Caco-2 (cell line): ENCODE measurements at regions of chr18 and their contacts with region 1.

Region 1: DNA sequence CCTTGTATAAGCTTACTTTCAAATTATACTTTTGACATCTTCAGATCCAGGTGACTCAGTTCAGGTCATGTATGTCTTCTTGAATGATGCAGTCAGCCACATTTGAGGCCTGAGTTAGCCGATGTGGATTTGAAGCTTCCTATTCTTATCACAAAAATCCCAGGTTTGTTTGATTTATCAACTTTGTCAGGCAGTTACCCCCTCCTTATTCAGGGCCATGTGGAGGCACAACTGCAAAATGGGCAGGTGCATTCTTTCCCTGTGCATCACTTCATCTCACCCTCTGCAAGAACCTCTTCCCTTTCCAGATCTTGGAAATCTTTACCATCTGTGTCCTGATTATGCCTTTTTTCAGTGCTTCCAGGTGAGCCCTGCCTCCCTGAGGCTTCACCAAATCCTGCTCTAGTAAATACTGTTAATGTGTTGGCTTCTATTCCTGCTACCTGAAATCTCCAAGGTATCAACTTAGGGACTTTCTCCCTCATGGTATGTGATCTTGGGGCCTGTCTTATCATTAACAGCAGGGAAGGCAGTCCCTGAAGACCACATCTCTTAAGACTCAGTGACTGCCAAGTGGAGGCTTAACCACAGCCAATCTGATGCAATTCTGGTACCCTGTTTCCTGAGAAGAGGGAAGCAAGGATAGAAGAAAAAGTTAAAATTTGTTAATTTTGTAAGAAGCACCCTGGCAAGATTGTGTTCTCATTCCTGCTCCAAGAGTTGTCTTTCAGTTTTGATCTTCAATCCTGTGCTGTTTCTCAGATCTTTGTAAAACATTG is 9.4 kb upstream of the ARHGAP28 start:
- DNase-seq: peak; percentile 56 to 57
- H3K4me3 ChIP-seq: no peak overlapping the region
- H3K4me3 Mint-ChIP-seq: peak overlapping the region; percentile 60
- H3K27ac Mint-ChIP-seq: peak overlapping the region; percentile 99
- H3K4me1 ChIP-seq: peaks cover 96% of the 10 kb centered on the region
- H3K4me1 Mint-ChIP-seq: peaks cover 65% of the 10 kb centered on the region
- H3K27me3 ChIP-seq: no peaks in the 10 kb centered on the region
- H3K27me3 Mint-ChIP-seq: no peaks in the 10 kb centered on the region
- CTCF ChIP-seq: no peak

Region 2: DNA sequence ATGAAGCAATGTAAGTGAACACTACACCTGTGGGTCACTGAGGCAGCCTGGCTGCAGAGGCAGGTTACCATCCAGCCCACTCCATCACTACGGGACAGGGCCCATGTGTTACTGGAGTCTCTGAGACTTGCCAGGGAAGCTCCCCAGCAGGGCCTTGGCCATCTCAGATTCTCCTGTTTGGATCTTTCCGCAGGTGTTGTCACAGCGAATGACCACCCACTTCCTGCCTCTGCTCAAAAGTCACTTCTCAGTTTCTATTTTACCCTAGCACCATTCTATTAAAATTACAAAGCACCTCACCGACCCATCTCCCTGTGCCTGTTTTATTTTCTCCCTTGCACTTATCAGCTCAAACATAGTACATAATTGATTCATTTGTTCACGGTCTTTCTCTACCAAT is 270.9 kb before region 1 on chr18:
- CTCF ChIA-PET with region 1: no interaction called
- POLR2A ChIA-PET with region 1: no interaction called
- intact Hi-C with region 1: no loop called
- DNase-seq: no peak
- H3K4me3 ChIP-seq: no peak overlapping the region
- H3K4me3 Mint-ChIP-seq: no peak overlapping the region
- H3K27ac Mint-ChIP-seq: no peak overlapping the region
- H3K4me1 ChIP-seq: no peaks in the 10 kb centered on the region
- H3K4me1 Mint-ChIP-seq: no peaks in the 10 kb centered on the region
- H3K27me3 ChIP-seq: no peaks in the 10 kb centered on the region
- H3K27me3 Mint-ChIP-seq: peaks cover 11% of the 10 kb centered on the region
- CTCF ChIP-seq: no peak

Region 3: GRCh38 chr18:6543330-6543908 is 176.7 kb before region 1 on chr18:
- CTCF ChIA-PET with region 1: no interaction called
- POLR2A ChIA-PET with region 1: no interaction called
- intact Hi-C with region 1: loop called (anchors 1 kb)
- DNase-seq: peak in 1 of 2 experiments; percentile 35
- H3K4me3 ChIP-seq: no peak overlapping the region
- H3K4me3 Mint-ChIP-seq: no peak overlapping the region
- H3K27ac Mint-ChIP-seq: no peak overlapping the region
- H3K4me1 ChIP-seq: peaks cover 7% of the 10 kb centered on the region
- H3K4me1 Mint-ChIP-seq: peaks cover 7% of the 10 kb centered on the region
- H3K27me3 ChIP-seq: no peaks in the 10 kb centered on the region
- H3K27me3 Mint-ChIP-seq: no peaks in the 10 kb centered on the region
- CTCF ChIP-seq: peak; percentile 64 to 65